ENCODE measurements at regions of chr4 and their contacts with region 1.

Region 1: GRCh38 chr4:183074296-183074990 is 24.6 kb upstream of the WWC2 start:
- DNase-seq: no peak
- H3K4me3 Mint-ChIP-seq: no peak overlapping the region
- H3K27ac Mint-ChIP-seq: no peak overlapping the region
- H3K4me1 Mint-ChIP-seq: no peaks in the 10 kb centered on the region
- H3K27me3 Mint-ChIP-seq: peaks cover 2% of the 10 kb centered on the region

Region 2: GRCh38 chr4:182778222-182778982 is 296.0 kb before region 1 on chr4:
- CTCF ChIA-PET with region 1: no interaction called
- intact Hi-C with region 1: no loop called
- DNase-seq: no peak
- H3K4me3 Mint-ChIP-seq: no peak overlapping the region
- H3K27ac Mint-ChIP-seq: no peak overlapping the region
- H3K4me1 Mint-ChIP-seq: no peaks in the 10 kb centered on the region
- H3K27me3 Mint-ChIP-seq: no peaks in the 10 kb centered on the region

Region 3: GRCh38 chr4:182938205-182938645 is 136.2 kb before region 1 on chr4:
- CTCF ChIA-PET with region 1: interaction called, 12 read pairs
- intact Hi-C with region 1: loop called (anchors 1 kb)
- DNase-seq: peak; percentile 81
- H3K4me3 Mint-ChIP-seq: no peak overlapping the region
- H3K27ac Mint-ChIP-seq: no peak overlapping the region
- H3K4me1 Mint-ChIP-seq: peaks cover 6% of the 10 kb centered on the region
- H3K27me3 Mint-ChIP-seq: peaks cover 7% of the 10 kb centered on the region

Region 4: DNA sequence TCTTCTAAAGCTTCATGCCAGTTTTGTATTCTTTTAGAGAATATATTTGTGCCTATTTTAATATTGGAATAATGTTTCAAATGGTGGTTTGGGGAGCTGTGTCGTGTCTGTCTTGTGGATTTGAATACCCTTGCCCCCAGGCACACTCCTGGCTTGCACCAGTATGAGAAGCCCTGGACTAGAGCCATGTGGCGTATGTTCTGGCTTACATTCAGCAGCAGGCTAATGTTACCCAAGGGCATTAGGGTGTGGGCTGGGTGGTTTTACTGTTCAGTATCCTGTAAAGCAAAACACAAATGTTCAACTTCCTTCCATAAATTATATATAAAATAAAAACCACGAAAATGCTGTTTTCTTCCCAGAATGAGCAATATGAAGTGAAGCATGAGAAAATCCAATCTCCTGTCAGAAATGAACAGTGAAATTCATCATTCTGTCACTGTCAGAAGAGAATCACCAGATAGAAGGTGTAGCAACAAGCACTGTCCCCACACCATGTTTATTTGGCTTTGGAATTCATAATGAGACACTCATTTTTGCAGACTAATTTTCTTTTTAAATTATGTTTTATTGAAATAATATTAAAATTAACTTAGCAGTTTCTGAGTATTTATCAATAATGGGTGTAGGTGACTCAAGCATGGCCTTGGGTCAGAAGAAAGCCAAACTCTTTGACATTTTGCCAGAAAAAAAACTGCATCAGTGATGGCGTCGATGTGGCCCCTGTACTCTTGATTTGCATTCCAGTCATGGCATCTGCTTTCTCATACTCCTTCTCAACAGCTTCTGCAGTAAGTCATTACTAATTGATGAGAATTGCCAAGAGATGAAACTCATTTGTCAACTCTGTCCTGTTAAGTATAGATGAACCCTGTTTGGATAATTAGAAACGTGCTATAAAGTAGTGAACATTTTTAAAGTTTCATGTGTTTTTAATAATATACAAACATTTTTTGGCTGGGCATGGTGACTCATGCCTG is 68.4 kb after region 1 on chr4:
- CTCF ChIA-PET with region 1: interaction called, 3 read pairs
- intact Hi-C with region 1: loop called (anchors 2 kb)
- DNase-seq: no peak
- H3K4me3 Mint-ChIP-seq: no peak overlapping the region
- H3K27ac Mint-ChIP-seq: no peak overlapping the region
- H3K4me1 Mint-ChIP-seq: peaks cover 11% of the 10 kb centered on the region
- H3K27me3 Mint-ChIP-seq: no peaks in the 10 kb centered on the region

Region 5: GRCh38 chr4:183249857-183250256 is 175.4 kb after region 1 on chr4:
- CTCF ChIA-PET with region 1: interaction called, 57 read pairs
- intact Hi-C with region 1: loop called (anchors 1 kb)
- DNase-seq: peak; percentile 39
- H3K4me3 Mint-ChIP-seq: no peak overlapping the region
- H3K27ac Mint-ChIP-seq: no peak overlapping the region
- H3K4me1 Mint-ChIP-seq: no peaks in the 10 kb centered on the region
- H3K27me3 Mint-ChIP-seq: no peaks in the 10 kb centered on the region

Region 6: GRCh38 chr4:183256756-183257385 is 182.4 kb after region 1 on chr4:
- CTCF ChIA-PET with region 1: interaction called, 80 read pairs
- intact Hi-C with region 1: loop called (anchors 1 kb)
- DNase-seq: peak; percentile 60
- H3K4me3 Mint-ChIP-seq: no peak overlapping the region
- H3K27ac Mint-ChIP-seq: no peak overlapping the region
- H3K4me1 Mint-ChIP-seq: no peaks in the 10 kb centered on the region
- H3K27me3 Mint-ChIP-seq: no peaks in the 10 kb centered on the region

Region 7: DNA sequence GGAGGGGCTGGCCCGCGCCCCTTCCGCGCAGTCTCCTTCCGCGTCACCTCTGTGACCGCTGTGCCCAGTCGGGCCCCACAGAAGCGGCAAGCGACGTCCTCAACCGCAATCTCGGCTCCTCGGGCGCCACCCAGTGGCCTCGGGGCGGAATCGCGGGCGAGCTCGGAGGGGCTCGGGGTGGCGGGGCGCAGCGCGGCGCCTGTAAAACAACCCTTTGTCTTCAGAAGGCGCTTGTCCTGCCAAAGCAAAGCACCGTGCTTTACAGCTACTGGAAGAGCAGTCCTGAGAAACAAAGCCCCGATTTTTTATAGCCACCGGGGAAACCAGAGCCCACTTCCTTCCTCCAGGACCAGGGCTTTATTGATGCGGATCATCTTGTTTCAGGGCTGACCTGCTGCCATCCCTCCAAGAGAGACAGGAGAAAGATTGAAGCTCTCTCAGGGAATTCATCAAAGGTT is 332.7 kb after region 1 on chr4:
- CTCF ChIA-PET with region 1: interaction called, 3 read pairs
- intact Hi-C with region 1: loop called (anchors 1 kb)
- DNase-seq: peak; percentile 94
- H3K4me3 Mint-ChIP-seq: peak overlapping the region; percentile 76
- H3K27ac Mint-ChIP-seq: peak overlapping the region; percentile 79
- H3K4me1 Mint-ChIP-seq: peaks cover 6% of the 10 kb centered on the region
- H3K27me3 Mint-ChIP-seq: no peaks in the 10 kb centered on the region